Posterior vena cava (tissue), 2 donors: ENCODE measurements at regions of chr1 and their contacts with region 1.

Region 1: DNA sequence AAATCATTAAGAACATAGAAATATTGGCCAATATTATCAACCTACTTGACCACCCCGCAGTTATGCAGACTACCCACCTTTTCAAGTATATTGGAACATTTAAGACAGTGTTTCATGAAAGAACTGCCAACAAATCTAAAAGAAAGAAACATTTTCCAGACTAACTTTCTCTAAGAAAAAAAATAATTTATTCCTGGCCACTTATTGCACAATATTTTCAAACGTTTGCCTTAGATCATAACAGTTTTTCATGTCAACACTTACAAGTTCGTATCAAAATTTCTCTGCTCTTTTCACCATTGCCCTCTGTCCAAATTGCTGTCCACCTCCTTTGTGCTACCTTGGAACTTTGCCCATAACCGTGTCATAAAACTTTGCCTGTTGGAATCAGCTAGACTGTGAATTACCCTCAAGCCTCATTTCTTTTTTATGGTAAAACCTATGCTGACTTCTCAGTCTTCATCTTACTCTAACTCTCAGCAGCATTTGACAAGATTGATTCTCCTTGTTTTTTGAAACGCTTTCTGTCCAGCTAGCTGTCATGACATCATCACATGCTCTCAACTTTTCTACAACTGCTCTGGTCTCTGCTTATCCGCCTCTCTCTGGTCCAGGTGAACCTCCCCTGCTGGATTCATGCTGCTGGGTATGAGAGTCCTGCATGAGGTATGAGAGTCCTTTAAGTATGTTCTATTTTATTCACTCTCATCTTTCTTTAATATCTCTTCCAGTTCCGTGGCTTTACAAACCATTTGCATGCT is 92.8 kb upstream of the CHRM3 start:
- DNase-seq: no peak

Region 2: DNA sequence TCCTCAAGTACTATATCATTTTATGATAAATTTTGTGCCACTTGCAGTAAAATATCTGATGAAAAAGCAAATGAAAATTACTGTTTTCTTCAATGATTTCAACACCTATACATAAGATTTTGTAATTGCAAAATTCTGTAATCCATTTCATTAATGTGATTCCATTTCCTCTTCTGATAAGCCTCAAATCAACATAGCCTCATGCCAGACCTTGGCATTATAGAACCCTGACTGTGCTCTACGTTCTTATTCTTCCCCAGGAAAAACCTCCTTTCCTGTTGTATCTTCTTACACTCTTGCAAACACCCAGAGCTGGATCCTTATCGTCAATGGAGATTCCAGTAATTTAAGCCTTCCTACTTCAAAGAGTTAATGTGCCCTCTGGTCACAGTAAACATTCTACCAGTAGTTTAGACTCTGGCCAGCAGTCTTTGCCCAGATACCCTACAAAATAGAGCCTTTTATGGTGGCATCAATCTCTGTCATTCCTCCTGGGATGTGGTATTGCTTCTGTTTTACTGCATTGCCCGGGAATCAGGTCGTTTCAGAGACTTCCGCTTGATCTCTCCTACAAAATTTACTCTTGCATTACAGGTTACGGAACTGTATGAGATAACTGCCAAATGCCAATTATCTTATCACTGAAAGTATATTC is 44.4 kb after region 1 on chr1:
- intact Hi-C with region 1: loop called in 1 of 2 experiments (anchors 2 kb)
- DNase-seq: no peak